ENCODE measurements at regions of chr9 and their contacts with region 1.

Region 1: GRCh38 chr9:132669698-132670456 is at the start of gene DDX31:
- H3K4me3 ChIP-seq: peak within 1 kb of the TSS; percentile 94
- H3K27ac ChIP-seq: peak within 1 kb of the TSS; percentile 98
- H3K4me1 ChIP-seq: no peaks in the 10 kb centered on the region
- CTCF ChIP-seq: peak; percentile 71

Region 2: GRCh38 chr9:132651254-132651653 is 18.6 kb before region 1 on chr9:
- CTCF ChIA-PET with region 1: interaction called, 4 read pairs
- POLR2A ChIA-PET with region 1: interaction called, 12 read pairs
- H3K4me3 ChIP-seq: no peak overlapping the region
- H3K27ac ChIP-seq: no peak overlapping the region
- H3K4me1 ChIP-seq: no peaks in the 10 kb centered on the region
- CTCF ChIP-seq: peak; percentile 35; the same call in 1 of the 2 replicates

Region 3: DNA sequence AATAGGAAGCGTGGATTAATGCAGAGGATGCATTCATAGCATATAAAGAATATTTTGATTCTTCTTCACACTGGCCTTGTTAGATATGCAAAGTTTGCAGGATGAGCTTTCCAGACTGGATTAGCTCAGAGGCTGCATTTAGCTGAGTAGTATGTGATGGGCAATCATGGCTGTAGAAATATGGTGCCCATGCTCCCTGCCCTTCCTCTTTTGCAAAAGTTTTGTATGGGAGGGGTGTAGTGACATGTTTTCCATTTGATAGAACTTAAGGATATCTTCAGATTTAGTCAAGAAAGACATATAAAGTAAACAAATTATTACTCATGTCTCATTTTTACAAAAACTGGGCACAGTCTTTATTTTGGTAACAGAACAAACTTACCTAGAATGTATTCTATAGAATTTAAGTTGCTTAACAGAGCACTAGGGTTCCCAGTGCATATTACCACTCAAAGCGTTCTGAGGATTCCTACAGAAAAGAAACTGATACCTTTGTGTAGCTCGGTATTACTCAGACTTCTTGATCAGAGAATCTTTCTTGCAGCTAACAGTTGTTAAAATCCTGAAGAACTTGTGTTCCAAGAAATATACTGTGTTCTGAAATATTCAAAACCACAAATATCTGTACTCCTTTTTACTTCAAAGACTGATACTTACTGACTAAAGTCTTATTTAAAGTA is 10.2 kb after region 1 on chr9:
- CTCF ChIA-PET with region 1: no interaction called
- POLR2A ChIA-PET with region 1: interaction called, 11 read pairs
- H3K4me3 ChIP-seq: no peak overlapping the region
- H3K27ac ChIP-seq: no peak overlapping the region
- H3K4me1 ChIP-seq: peaks cover 3% of the 10 kb centered on the region; the same call in 1 of the 2 replicates
- CTCF ChIP-seq: no peak

Region 4: DNA sequence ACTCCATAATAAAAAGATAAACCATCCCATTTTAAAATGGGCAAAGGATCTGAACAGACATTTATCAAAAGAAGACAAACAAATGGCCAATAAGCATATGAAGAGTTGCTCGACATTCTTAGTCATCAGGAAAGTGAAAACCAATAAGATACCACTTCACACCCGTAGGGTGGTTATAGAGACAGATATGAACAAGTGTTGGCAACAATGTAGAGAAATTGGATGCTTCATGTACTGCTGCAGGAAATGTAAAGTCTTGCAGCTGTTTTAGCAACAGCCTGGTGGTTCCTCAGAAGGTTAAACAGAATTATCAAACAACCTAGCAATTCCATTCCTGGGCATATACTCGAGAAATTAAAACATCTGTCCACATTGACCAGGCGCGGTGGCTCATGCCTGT is 42.9 kb after region 1 on chr9:
- CTCF ChIA-PET with region 1: no interaction called
- POLR2A ChIA-PET with region 1: no interaction called
- H3K4me3 ChIP-seq: no peak overlapping the region
- H3K27ac ChIP-seq: no peak overlapping the region
- H3K4me1 ChIP-seq: no peaks in the 10 kb centered on the region
- CTCF ChIP-seq: no peak